GM12878 (cell line): ENCODE measurements at regions of chr1 and their contacts with region 1.

Region 1: GRCh38 chr1:13662493-13662892 is 37.5 kb upstream of the PRDM2 start:
- DNase-seq: no peak
- ATAC-seq: no peak
- H3K4me3 ChIP-seq: no peak overlapping the region
- H3K27ac ChIP-seq: no peak overlapping the region
- H3K4me1 ChIP-seq: peaks cover 22% of the 10 kb centered on the region
- H3K27me3 ChIP-seq: no peaks in the 10 kb centered on the region
- CTCF ChIP-seq: no peak
- EP300 ChIP-seq: no peak
- POLR2A ChIP-seq: no peak
- RAD21 ChIP-seq: no peak

Region 2: DNA sequence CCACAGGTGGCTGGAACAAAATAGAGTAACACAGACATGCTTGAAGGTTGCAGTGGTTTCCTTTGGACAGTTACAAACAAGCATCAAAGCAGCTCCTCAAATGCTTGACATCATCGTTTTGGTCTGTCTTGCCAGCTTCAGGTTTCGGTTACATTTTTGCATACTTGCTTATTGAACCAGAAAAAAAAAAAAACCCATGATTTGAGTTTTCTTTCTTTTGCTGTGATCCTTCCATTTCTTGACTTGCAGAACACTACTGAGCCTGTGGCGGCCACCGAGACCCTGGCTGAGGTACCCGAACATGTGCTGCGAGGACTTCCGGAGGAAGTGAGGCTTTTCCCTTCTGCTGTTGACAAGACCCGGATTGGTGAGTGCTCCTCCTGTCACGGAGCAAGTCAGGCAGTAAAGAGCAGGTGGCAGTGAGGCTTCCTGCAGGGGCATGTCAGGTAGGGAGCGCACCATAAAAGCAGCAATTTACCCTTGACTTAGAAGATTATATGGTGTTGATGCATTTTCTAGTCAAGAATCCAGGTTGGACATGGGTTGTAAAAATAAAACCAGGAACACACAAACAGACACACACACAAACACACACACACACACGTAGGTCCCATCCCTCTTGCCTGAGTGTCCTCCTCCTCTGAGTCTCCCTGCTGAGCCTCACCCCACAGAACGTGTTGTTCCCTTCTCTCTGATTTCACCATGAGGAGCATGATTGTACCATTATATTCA is 68.4 kb after region 1 on chr1:
- CTCF ChIA-PET with region 1: interaction called, 88 read pairs
- POLR2A ChIA-PET with region 1: interaction called, 8 read pairs
- RAD21 ChIA-PET with region 1: interaction called, 50 read pairs
- SMC1A ChIA-PET with region 1: interaction called, 121 read pairs
- in situ Hi-C with region 1: loop called (anchors 5 kb)
- intact Hi-C with region 1: no loop called
- DNase-seq: peak; percentile 94
- ATAC-seq: peak; percentile 93
- H3K4me3 ChIP-seq: peak overlapping the region; percentile 54
- H3K27ac ChIP-seq: peak overlapping the region; percentile 98
- H3K4me1 ChIP-seq: peaks cover 56% of the 10 kb centered on the region
- H3K27me3 ChIP-seq: no peaks in the 10 kb centered on the region
- CTCF ChIP-seq: 0 out of 6 replicates have a peak, but pooled peaks of 2 of the 3 experiments have one; percentile 17 to 19
- EP300 ChIP-seq: peak; percentile 61 to 87; a peak in 2 of 4 replicates
- POLR2A ChIP-seq: peak; percentile 81
- RAD21 ChIP-seq: no peak

Region 3: DNA sequence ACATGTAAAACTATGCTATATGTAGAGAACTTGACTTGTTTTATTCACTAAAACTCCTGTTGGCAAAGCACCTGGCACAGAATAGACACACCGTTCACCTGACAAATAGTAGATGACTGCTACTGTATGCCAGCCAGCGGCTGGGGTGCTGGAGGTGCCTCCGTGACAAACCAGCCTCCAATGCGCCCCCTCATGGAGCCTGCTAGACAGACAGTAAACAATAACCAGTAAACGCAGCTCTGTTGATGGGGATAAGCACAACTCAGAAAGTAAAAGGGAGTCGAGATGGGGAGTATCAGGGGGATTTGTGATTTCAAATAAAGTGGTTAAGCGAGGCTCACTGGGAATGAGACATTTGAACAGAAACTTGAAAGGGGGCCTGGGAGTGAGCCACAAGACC is 144.7 kb after region 1 on chr1:
- CTCF ChIA-PET with region 1: interaction called, 6 read pairs
- POLR2A ChIA-PET with region 1: no interaction called
- RAD21 ChIA-PET with region 1: interaction called, 4 read pairs
- SMC1A ChIA-PET with region 1: interaction called, 3 read pairs
- in situ Hi-C with region 1: loop called (anchors 10 kb)
- intact Hi-C with region 1: loop called (anchors 1 kb)
- DNase-seq: no peak
- ATAC-seq: peak; percentile 63
- H3K4me3 ChIP-seq: no peak overlapping the region
- H3K27ac ChIP-seq: no peak overlapping the region
- H3K4me1 ChIP-seq: peaks cover 10% of the 10 kb centered on the region
- H3K27me3 ChIP-seq: no peaks in the 10 kb centered on the region
- CTCF ChIP-seq: peak; percentile 33 to 58 (median 42); a peak in 5 of 6 replicates
- EP300 ChIP-seq: no peak
- POLR2A ChIP-seq: no peak
- RAD21 ChIP-seq: peak; percentile 43

Region 4: DNA sequence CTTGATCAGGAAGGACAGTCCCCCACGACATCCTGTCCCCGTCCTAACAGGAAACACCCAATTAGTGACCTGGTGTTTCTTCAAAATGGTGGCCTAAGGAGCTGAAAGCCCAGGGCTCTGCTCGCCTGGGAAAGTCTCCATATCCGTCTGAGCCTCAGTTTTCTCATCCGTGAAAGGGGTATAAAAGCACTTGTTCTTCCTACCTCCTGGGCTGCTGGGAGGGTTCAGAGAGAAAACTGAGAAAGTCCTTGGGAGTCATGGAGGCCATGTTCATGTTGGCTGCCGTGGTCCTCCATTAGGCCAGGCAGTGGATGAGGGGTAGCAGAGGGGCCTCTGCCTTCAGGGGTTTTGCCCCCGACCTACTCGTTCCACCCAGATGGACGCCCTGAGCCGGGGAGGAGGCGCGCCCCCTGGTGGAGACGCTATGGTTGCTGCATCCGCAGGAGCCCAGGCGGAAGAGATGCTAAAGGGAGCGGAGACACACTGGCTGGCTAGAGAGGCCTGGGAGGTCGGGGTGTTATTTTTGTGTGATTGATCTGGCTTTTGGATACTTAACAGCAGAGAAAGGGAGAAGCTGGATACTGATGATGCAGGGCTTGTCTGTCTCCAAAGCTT is 151.0 kb after region 1 on chr1:
- CTCF ChIA-PET with region 1: interaction called, 26 read pairs
- POLR2A ChIA-PET with region 1: no interaction called
- RAD21 ChIA-PET with region 1: interaction called, 7 read pairs
- SMC1A ChIA-PET with region 1: interaction called, 3 read pairs
- in situ Hi-C with region 1: loop called (anchors 10 kb)
- intact Hi-C with region 1: loop called (anchors 1 kb)
- DNase-seq: no peak
- ATAC-seq: peak; percentile 86
- H3K4me3 ChIP-seq: no peak overlapping the region
- H3K27ac ChIP-seq: no peak overlapping the region
- H3K4me1 ChIP-seq: peaks cover 13% of the 10 kb centered on the region
- H3K27me3 ChIP-seq: no peaks in the 10 kb centered on the region
- CTCF ChIP-seq: peak; percentile 57 to 87 (median 71)
- EP300 ChIP-seq: no peak
- POLR2A ChIP-seq: no peak
- RAD21 ChIP-seq: peak; percentile 66

Region 5: DNA sequence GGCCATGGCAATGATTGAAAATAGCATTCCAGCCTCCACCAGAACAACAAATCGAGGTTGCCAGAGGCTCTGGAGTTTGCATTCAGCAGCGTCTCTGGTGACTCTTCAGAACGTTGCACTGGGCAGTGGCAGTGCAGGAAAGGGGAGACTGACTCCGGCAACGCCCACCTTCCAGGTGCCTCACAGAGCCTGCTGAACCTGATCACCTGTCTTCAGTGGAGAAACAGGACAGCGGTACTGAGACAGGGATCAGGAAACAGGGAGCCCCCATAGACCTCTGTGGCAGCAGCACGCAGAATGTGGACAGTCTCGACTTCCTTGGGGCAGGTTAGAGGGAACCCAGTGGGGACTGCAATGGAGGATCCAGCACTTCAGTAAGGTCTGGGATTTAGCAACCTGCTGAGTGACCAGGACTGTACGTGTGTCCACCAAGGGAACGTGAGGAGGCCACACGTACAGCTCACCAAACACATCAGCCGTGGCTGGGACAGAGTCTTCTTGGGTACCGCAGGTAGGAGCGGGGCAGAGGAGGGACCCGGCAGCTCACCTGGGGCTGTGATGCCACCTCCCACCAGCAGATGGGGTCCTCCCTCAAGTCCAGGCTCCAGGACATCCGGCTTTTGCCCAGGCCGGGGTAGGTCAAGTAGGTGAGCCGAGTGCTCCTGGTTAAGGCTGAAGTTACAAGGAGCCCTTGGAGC is 166.1 kb after region 1 on chr1:
- CTCF ChIA-PET with region 1: interaction called, 11 read pairs
- POLR2A ChIA-PET with region 1: no interaction called
- RAD21 ChIA-PET with region 1: no interaction called
- SMC1A ChIA-PET with region 1: interaction called, 6 read pairs
- in situ Hi-C with region 1: no loop called
- intact Hi-C with region 1: no loop called
- DNase-seq: no peak
- ATAC-seq: peak; percentile 97
- H3K4me3 ChIP-seq: no peak overlapping the region
- H3K27ac ChIP-seq: no peak overlapping the region
- H3K4me1 ChIP-seq: no peaks in the 10 kb centered on the region
- H3K27me3 ChIP-seq: no peaks in the 10 kb centered on the region; a peak in 1 of 4 replicates
- CTCF ChIP-seq: peak; percentile 66 to 72 (median 66); a peak in 5 of 6 replicates
- EP300 ChIP-seq: no peak
- POLR2A ChIP-seq: no peak
- RAD21 ChIP-seq: peak; percentile 48

Region 6: GRCh38 chr1:13960375-13960987 is 298.0 kb after region 1 on chr1:
- CTCF ChIA-PET with region 1: interaction called, 5 read pairs
- POLR2A ChIA-PET with region 1: no interaction called
- RAD21 ChIA-PET with region 1: interaction called, 3 read pairs
- SMC1A ChIA-PET with region 1: interaction called, 3 read pairs
- in situ Hi-C with region 1: loop called (anchors 5 kb)
- intact Hi-C with region 1: loop called (anchors 1 kb)
- DNase-seq: peak; percentile 17
- ATAC-seq: peak; percentile 85
- H3K4me3 ChIP-seq: no peak overlapping the region
- H3K27ac ChIP-seq: no peak overlapping the region
- H3K4me1 ChIP-seq: no peaks in the 10 kb centered on the region
- H3K27me3 ChIP-seq: no peaks in the 10 kb centered on the region; a peak in 1 of 4 replicates
- CTCF ChIP-seq: peak; percentile 94 to 96 (median 95)
- EP300 ChIP-seq: no peak
- POLR2A ChIP-seq: no peak
- RAD21 ChIP-seq: peak; percentile 96